HepG2 (cell line): ENCODE measurements at regions of chr12 and their contacts with region 1.

Region 1: DNA sequence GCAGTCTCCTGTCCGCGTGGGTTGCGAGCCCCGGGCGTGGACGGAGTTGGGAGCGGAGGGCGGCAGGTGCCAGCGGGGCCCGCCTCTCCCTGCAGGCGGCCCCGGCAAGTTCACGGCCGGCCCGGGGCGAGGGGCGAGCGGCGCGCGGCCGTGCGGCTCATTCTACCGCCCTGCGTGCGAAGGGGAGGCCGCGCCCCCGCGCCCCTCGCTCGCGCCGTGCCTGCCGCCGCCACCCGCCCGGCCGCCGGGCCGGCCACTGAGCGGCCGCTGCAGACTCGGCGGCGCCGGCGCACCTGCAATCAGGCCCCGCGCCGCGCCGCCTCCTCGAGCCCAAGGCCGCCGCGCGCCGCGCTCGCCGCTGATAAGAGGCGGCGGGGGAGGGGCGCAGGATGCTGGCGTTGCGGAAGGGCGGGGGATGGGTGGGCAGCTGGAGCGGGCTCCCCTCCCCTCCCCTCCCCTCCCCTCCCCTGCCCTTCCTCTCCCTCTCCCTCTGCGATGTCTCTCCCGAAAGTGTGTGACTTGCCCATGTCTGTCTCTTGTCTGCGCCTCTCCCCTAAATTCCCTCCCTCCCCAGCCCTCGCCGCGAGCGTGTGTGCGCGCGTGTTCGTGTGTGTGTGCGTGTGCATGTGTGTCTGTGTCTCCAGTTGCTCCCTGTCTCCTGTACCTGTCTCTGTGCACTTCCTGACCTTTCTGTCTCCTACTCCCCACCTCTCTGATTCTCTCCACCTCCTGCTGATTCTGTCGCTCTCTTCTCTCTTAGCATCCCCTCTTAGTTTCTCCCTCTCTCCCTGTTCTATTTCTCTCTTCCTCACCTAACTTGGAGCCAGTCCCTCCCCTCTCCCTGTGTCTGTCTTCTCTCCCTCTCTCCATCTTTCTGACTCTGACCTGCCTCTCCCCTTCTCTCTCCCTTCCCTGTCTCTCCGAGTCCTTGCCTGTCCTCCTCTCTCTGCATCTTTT is 768.1 kb upstream of the TBX3 start:
- DNase-seq: peak; percentile 66
- ATAC-seq: peak; percentile 89
- H3K4me3 ChIP-seq: peak overlapping the region; percentile 25 to 59 (median 32); a peak in 5 of 6 replicates
- H3K27ac ChIP-seq: peak overlapping the region; percentile 73
- H3K4me1 ChIP-seq: peaks cover 91% of the 10 kb centered on the region
- H3K27me3 ChIP-seq: no peaks in the 10 kb centered on the region
- CTCF ChIP-seq: no peak
- EP300 ChIP-seq: peak; percentile 88; a peak in 3 of 4 replicates
- POLR2A ChIP-seq: no peak
- RAD21 ChIP-seq: peak; percentile 68

Region 2: GRCh38 chr12:115416869-115417268 is 35.2 kb before region 1 on chr12:
- CTCF ChIA-PET with region 1: no interaction called
- POLR2A ChIA-PET with region 1: interaction called, 5 read pairs
- in situ Hi-C with region 1: no loop called
- intact Hi-C with region 1: loop called (anchors 1 kb)
- DNase-seq: no peak
- ATAC-seq: no peak
- H3K4me3 ChIP-seq: no peak overlapping the region
- H3K27ac ChIP-seq: no peak overlapping the region
- H3K4me1 ChIP-seq: peaks cover 47% of the 10 kb centered on the region
- H3K27me3 ChIP-seq: no peaks in the 10 kb centered on the region
- CTCF ChIP-seq: no peak
- EP300 ChIP-seq: no peak
- POLR2A ChIP-seq: no peak
- RAD21 ChIP-seq: no peak